ENCODE measurements at regions of chr19 and their contacts with region 1.

Region 1: DNA sequence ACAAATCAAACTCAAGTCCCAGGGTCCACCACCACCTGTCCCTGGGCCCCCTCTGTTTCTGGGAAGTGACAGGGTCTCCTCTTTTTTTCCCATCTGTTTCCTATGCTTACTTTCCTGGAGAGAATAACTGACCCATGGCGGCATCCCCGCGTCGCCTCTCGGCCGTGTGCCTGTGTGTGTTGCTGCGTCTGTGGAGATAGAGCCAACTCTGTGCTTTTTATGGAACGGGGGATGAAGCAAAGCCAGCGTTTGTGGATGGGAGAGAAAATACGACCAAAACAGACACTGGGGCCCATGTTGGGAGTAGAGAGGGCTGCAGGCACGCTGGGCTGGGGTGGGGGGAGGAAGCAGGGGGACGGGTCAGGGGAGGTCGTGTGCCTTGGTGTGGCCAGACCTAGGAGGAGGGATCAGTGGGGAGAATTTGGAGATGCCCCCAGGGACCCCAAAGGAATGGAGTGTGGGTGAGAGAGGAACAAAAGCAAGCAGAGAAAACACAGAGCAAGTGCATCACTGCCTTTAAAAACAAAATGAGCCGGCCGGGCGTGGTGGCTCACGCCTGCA is 16.6 kb downstream of the PLK5 start:
- DNase-seq: peak; percentile 67
- H3K4me3 ChIP-seq: no peak overlapping the region
- H3K27ac ChIP-seq: peak overlapping the region; percentile 24 to 53
- H3K4me1 ChIP-seq: peaks cover 42% of the 10 kb centered on the region
- H3K27me3 ChIP-seq: no peaks in the 10 kb centered on the region
- CTCF ChIP-seq: no peak
- POLR2A ChIP-seq: no peak

Region 2: DNA sequence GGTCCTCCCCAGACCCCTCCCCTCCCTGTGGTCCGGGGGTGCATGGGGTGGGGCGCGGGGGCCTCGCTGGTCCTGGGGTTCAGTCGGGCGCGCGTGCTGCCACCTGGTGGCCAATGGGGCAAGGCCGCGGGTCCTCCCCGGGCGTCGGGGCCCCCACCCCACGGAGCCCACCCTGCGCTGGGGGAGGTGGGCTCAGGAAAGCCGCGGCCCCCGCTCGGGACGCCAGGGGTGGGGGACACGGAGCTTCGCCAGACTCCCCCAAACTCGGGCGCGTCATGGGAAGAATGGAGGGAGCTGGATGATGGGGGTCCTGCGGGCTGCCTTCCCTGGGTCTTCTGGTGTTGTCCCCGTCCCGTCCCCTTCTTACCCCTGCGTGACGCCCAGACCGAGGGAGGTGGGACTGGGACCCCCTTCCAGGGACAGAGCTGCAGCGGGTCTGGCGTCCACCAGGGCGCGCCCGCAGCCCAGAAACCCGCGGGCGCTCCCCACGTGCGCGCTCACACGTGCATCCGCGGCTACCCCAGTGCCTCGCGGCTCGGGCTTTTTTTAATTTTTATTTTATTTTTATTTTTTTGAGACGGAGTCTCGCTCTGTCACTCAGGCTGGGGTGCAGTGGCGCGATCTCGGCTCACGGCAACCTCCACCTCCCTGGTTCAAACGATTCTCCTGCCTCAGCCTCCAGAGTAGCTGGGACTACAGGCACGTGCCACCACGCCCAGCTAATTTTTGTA is 131.8 kb after region 1 on chr19:
- intact Hi-C with region 1: loop called (anchors 10 kb)
- DNase-seq: peak; percentile 42
- H3K4me3 ChIP-seq: peak overlapping the region in 1 of 2 donors; percentile 30
- H3K27ac ChIP-seq: no peak overlapping the region
- H3K4me1 ChIP-seq: peaks cover 16% of the 10 kb centered on the region
- H3K27me3 ChIP-seq: no peaks in the 10 kb centered on the region
- CTCF ChIP-seq: peak in 2 of 3 experiments; percentile 48 to 91
- POLR2A ChIP-seq: no peak

Region 3: DNA sequence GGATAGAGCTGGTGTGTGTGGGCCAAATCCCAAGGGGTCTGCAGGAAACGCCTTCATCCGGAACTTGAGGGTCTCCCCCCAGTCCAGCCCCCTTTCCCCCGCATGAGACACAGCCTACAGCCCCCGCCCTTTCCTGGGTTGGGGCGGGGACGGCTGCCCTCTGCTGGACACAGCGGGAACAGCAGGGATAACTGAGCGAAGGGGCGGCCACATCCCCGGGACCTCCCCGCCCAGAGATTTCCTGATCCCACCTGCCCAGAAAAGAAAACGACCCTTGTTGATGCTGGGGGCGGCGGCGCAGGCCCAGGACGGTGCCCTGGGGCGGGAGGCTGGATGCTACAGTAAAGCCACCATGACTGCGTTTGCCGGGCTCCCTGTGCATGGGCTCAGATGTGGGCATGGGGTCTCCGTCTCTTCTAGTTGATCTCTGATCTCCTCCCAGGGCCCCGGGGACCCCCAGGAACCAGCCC is 227.1 kb after region 1 on chr19:
- intact Hi-C with region 1: loop called (anchors 10 kb)
- DNase-seq: peak; percentile 43
- H3K4me3 ChIP-seq: no peak overlapping the region
- H3K27ac ChIP-seq: no peak overlapping the region
- H3K4me1 ChIP-seq: no peaks in the 10 kb centered on the region
- H3K27me3 ChIP-seq: no peaks in the 10 kb centered on the region
- CTCF ChIP-seq: peak; percentile 83 to 98 (median 88)
- POLR2A ChIP-seq: no peak

Measured in testis (tissue), 5 donors.